CD4-positive, alpha-beta T cell (primary cell): ENCODE measurements at regions of chr11 and their contacts with region 1.

Region 1: DNA sequence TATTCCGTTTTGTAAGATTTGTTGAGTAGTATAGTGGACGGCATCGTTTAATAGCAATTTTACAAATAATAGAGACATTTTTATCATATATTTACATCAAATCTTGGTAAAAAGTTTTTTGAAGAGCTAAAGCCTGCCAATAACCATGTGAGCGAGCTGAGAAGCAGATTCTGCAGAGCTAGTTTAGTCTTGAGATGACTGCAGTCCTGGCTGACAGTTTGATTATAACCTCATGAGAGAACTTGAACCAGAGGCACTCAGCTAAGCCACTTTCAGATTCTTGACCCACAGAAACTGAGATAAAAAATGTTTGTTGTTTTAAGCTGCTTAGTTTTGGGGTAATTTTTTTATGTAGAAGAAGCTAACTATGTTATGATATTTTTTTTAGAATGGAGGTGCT is 78.9 kb downstream of the PDE3B start:
- DNase-seq: no peak
- ATAC-seq: no peak
- H3K4me3 ChIP-seq: no peak overlapping the region
- H3K4me3 Mint-ChIP-seq: no peak overlapping the region
- H3K27ac ChIP-seq: no peak overlapping the region
- H3K27ac Mint-ChIP-seq: no peak overlapping the region
- H3K4me1 ChIP-seq: no peaks in the 10 kb centered on the region
- H3K4me1 Mint-ChIP-seq: peaks cover 40% of the 10 kb centered on the region
- H3K27me3 ChIP-seq: no peaks in the 10 kb centered on the region
- H3K27me3 Mint-ChIP-seq: no peaks in the 10 kb centered on the region
- CTCF ChIP-seq: no peak

Region 2: DNA sequence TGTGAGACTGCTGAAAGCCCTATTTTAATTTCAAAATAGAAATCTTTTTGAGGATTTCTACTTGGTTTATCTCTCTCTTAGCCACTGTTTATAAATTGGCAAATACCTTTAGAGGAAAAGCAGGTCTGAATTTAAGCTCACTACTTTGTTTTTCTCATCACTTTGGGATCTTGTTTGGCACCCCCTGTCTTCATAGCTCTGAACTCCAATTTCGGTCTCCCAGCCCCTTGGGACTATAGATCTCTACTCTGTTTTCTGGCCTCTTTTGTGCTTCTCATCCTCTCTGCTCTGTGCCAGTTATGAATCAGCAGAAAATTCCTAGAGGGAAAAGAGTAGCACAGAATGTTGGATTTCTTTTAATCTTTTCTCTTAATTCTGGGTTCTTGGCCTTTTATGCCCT is 51.3 kb after region 1 on chr11:
- CTCF ChIA-PET with region 1: no interaction called
- POLR2A ChIA-PET with region 1: no interaction called
- intact Hi-C with region 1: loop called (anchors 5 kb)
- DNase-seq: peak in 3 of 14 experiments; percentile 43 to 61 (median 60)
- ATAC-seq: peak; percentile 68
- H3K4me3 ChIP-seq: no peak overlapping the region
- H3K4me3 Mint-ChIP-seq: peak overlapping the region; percentile 25
- H3K27ac ChIP-seq: no peak overlapping the region
- H3K27ac Mint-ChIP-seq: peak overlapping the region; percentile 21
- H3K4me1 ChIP-seq: peaks cover 5% of the 10 kb centered on the region
- H3K4me1 Mint-ChIP-seq: peaks cover 68% of the 10 kb centered on the region
- H3K27me3 ChIP-seq: no peaks in the 10 kb centered on the region
- H3K27me3 Mint-ChIP-seq: no peaks in the 10 kb centered on the region
- CTCF ChIP-seq: peak; percentile 21

Region 3: DNA sequence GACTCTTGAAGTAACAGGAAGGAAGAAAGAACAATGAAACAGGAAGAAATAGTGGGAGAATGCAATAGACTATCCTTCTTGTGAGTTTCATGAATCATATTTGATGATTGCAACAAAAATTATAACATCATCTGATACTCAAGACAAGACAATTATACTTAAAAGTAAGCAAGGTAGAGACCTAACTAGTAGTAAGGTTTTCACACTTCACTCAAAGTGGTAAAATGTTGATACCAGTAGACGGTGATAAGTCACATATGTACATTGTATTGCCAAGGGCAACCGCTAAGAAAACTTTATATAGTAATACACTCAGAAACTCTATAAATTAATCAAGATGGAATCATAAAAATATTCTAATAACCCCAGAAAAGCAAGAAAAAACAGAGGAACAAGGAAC is 61.7 kb after region 1 on chr11:
- CTCF ChIA-PET with region 1: no interaction called
- POLR2A ChIA-PET with region 1: no interaction called
- intact Hi-C with region 1: no loop called
- DNase-seq: peak in 1 of 14 experiments; percentile 26
- ATAC-seq: no peak
- H3K4me3 ChIP-seq: no peak overlapping the region
- H3K4me3 Mint-ChIP-seq: no peak overlapping the region
- H3K27ac ChIP-seq: no peak overlapping the region
- H3K27ac Mint-ChIP-seq: peak overlapping the region; percentile 22
- H3K4me1 ChIP-seq: peaks cover 5% of the 10 kb centered on the region
- H3K4me1 Mint-ChIP-seq: peaks cover 42% of the 10 kb centered on the region
- H3K27me3 ChIP-seq: no peaks in the 10 kb centered on the region
- H3K27me3 Mint-ChIP-seq: no peaks in the 10 kb centered on the region
- CTCF ChIP-seq: no peak

Region 4: DNA sequence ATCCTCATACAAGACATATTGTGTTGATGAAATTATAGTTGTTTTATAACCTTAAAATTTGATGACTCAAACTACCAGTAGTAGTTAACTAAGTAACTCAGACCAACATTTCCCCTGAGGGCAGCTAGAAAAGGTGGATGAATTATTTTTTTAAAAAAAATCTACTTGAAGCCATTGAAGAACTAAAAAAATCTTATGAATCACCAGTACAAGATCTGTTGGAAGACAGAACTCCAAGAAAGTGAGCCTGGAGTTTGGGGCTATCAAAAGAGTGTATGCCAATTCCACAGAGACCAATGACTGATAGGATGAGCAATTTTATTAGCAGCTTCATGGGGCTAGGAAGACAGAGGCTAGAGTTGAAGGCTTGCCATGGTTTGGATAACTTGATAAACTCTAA is 97.1 kb after region 1 on chr11:
- CTCF ChIA-PET with region 1: no interaction called
- POLR2A ChIA-PET with region 1: no interaction called
- intact Hi-C with region 1: no loop called
- DNase-seq: no peak
- ATAC-seq: no peak
- H3K4me3 ChIP-seq: no peak overlapping the region
- H3K4me3 Mint-ChIP-seq: no peak overlapping the region
- H3K27ac ChIP-seq: no peak overlapping the region
- H3K27ac Mint-ChIP-seq: no peak overlapping the region
- H3K4me1 ChIP-seq: no peaks in the 10 kb centered on the region
- H3K4me1 Mint-ChIP-seq: no peaks in the 10 kb centered on the region
- H3K27me3 ChIP-seq: no peaks in the 10 kb centered on the region
- H3K27me3 Mint-ChIP-seq: no peaks in the 10 kb centered on the region
- CTCF ChIP-seq: no peak